HepG2 (cell line): ENCODE measurements at regions of chr2 and their contacts with region 1.

Region 1: GRCh38 chr2:119223521-119224390 is at the start of gene STEAP3:
- DNase-seq: peak; percentile 74
- ATAC-seq: peak; percentile 93
- H3K4me3 ChIP-seq: peak within 1 kb of the TSS; percentile 71 to 87 (median 78)
- H3K27ac ChIP-seq: no peak within 1 kb of the TSS
- H3K4me1 ChIP-seq: peaks cover 54% of the 10 kb centered on the region
- H3K27me3 ChIP-seq: 0 out of 5 replicates have a peak, but pooled peaks cover 0 to 4% of the 10 kb centered on the region in 2 experiments
- CTCF ChIP-seq: 0 out of 2 replicates have a peak, but pooled peaks have one; percentile 10
- EP300 ChIP-seq: peak in 1 of 2 experiments; percentile 8; a peak in 1 of 4 replicates
- POLR2A ChIP-seq: peak; percentile 79 to 83
- RAD21 ChIP-seq: peak; percentile 26
- total RNA-seq, gene STEAP3: 12.8 and 21.1 TPM in 2 replicates

Region 2: DNA sequence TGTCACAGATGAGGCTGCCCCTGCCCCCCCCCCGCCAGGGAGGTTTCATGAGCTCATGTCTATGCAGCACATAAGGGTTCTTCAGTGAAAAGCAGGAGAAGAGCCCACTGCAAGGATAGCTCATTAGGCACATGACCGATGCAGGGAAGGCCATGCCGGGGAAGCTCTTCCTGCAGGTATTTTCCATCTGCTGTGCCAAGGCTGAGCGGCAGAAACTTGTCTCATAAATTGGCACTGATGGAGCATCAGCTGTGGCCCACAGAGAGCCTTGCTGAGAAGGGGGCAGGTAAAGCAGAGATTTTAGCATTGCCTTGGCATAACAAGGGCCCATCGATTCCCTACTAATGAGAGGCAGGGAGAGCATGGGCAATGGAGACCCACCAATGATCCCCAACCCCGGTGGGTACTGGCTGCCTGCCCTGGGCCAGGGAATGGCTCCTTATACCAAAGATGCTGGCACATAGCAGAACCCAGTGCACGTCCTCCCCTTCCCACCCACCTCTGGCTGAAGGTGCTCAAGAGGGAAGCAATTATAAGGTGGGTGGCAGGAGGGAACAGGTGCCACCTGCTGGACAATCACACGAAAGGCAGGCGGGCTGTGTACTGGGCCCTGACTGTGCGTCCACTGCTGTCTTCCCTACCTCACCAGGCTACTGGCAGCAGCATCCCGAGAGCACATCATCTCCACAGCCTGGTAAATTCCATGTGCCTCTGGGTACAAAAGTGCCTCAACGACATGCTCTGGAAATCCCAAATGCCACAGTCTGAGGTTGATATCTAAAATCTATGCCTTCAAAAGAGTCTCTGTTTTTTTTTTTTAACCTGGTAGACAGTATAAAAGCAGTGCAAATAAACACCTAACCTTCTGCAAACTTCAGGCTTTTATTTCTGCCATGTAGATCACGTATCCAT is 41.3 kb after region 1 on chr2:
- CTCF ChIA-PET with region 1: interaction called, 17 read pairs
- POLR2A ChIA-PET with region 1: interaction called, 4 read pairs
- in situ Hi-C with region 1: loop called (anchors 5 kb)
- intact Hi-C with region 1: loop called (anchors 1 kb)
- DNase-seq: peak; percentile 51
- ATAC-seq: peak; percentile 98
- H3K4me3 ChIP-seq: no peak overlapping the region
- H3K27ac ChIP-seq: no peak overlapping the region
- H3K4me1 ChIP-seq: peaks cover 10% of the 10 kb centered on the region
- H3K27me3 ChIP-seq: no peaks in the 10 kb centered on the region
- CTCF ChIP-seq: peak; percentile 96
- EP300 ChIP-seq: no peak
- POLR2A ChIP-seq: no peak
- RAD21 ChIP-seq: peak; percentile 83

Region 3: DNA sequence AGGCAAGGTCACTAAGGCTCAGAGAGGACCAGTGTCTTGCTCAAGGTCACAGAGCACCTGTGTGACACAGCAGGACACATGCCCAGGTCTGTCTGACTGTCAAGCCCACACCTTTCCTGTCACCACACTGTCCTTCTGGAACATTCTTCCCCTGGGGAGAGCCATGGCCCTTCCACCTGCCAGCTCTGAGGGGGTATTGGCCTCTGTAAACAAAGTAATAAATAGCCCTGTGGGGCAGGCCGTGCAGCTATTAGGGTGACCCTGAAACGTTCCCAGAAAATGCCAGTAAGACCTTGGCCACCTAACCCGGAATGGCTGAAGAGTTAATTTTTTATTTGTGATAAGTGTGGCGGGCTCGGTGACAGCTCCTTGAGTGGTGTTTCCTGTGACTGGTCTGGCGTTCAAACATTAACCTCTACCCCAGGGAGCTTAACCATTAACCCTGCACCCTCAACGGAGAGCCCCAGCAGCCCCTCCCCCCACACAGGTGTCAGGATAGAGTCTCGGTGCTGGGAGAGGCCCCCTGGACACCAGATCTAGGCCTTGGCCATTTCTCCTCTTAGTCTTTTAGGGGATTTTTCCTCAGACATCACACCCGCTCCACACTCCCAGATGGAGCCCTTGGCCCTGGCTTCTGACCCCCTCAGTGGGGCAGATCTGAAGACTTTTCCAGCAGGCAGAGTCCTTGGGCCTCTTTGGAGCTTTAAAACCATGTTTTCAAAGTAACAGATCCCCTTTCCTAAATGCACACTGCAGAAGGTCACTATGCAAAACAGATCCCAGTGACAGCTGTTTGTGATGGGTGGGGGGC is 263.9 kb after region 1 on chr2:
- CTCF ChIA-PET with region 1: no interaction called
- POLR2A ChIA-PET with region 1: no interaction called
- in situ Hi-C with region 1: loop called (anchors 5 kb)
- intact Hi-C with region 1: no loop called
- DNase-seq: peak; percentile 90
- ATAC-seq: peak; percentile 90
- H3K4me3 ChIP-seq: peak overlapping the region in 1 of 3 experiments; percentile 49; a peak in 2 of 6 replicates
- H3K27ac ChIP-seq: peak overlapping the region; percentile 54
- H3K4me1 ChIP-seq: peaks cover 87% of the 10 kb centered on the region
- H3K27me3 ChIP-seq: peaks cover 0 to 33% of the 10 kb centered on the region in 2 experiments; a peak in 3 of 5 replicates
- CTCF ChIP-seq: no peak
- EP300 ChIP-seq: peak in 1 of 2 experiments; percentile 63; a peak in 1 of 4 replicates
- POLR2A ChIP-seq: no peak
- RAD21 ChIP-seq: 0 out of 2 replicates have a peak, but pooled peaks have one; percentile 12